Vagina (tissue), 2 donors: ENCODE measurements at regions of chr1 and their contacts with region 1.

Region 1: DNA sequence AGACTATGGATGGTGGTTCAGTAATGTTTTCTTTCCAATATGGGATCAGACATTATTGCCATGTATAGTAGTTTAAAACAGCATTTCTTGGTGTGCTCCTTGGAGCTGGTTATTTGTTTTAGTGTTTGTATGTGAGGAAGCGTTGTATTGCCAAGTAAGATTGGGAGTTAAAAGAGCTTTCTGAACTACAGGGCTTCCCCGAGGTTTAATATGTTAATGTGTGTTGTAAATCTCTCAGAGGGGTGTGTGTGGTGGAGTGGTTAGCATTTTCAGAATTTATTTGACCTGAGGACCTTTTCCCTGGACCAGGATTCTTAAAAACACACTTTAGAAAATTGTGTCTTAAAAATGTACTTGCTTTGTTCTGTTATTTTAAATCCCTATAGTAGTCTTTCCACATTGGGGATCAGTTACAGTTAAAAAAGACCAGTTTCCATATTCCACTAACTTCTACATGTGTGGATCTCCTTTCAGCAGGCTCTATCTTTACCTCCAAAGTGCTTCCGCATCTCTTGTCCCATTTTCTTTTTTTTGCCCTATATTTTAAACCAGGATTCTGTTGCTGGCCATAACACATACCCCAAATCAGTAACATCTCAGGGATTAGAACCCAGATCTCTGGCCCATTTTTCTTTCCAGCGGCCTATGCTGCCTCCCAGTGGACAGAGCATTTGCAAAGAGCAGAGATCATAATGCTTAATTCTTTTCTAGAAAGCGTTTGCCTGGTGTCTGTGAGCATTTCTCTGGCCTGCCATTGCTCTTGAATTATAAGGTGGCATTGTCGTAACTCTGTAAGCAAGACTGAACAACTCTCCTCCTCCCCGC is 58.6 kb downstream of the PBX1 start:
- DNase-seq: no peak
- H3K4me3 ChIP-seq: no peak overlapping the region
- H3K27ac ChIP-seq: peak overlapping the region; percentile 48
- H3K4me1 ChIP-seq: peaks cover 95% of the 10 kb centered on the region
- H3K27me3 ChIP-seq: no peaks in the 10 kb centered on the region
- CTCF ChIP-seq: peak in 2 of 3 experiments; percentile 9 to 32
- POLR2A ChIP-seq: no peak

Region 2: GRCh38 chr1:163535807-163536206 is 1081.8 kb before region 1 on chr1:
- intact Hi-C with region 1: loop called (anchors 10 kb)
- DNase-seq: no peak
- H3K4me3 ChIP-seq: no peak overlapping the region
- H3K27ac ChIP-seq: no peak overlapping the region
- H3K4me1 ChIP-seq: no peaks in the 10 kb centered on the region
- H3K27me3 ChIP-seq: no peaks in the 10 kb centered on the region
- CTCF ChIP-seq: peak in 1 of 3 experiments; percentile 27
- POLR2A ChIP-seq: no peak

Region 3: GRCh38 chr1:164433141-164433817 is 184.3 kb before region 1 on chr1:
- intact Hi-C with region 1: no loop called
- DNase-seq: no peak
- H3K4me3 ChIP-seq: no peak overlapping the region
- H3K27ac ChIP-seq: no peak overlapping the region
- H3K4me1 ChIP-seq: no peaks in the 10 kb centered on the region
- H3K27me3 ChIP-seq: no peaks in the 10 kb centered on the region
- CTCF ChIP-seq: no peak
- POLR2A ChIP-seq: no peak

Region 4: GRCh38 chr1:164558461-164559341 is 58.9 kb before region 1 on chr1 and contains the start of gene PBX1:
- intact Hi-C with region 1: loop called (anchors 10 kb)
- DNase-seq: peak; percentile 98 to 100
- H3K4me3 ChIP-seq: peak within 1 kb of the TSS; percentile 82 to 91
- H3K27ac ChIP-seq: peak within 1 kb of the TSS; percentile 95
- H3K4me1 ChIP-seq: peaks cover 17% of the 10 kb centered on the region
- H3K27me3 ChIP-seq: no peaks in the 10 kb centered on the region
- CTCF ChIP-seq: no peak
- POLR2A ChIP-seq: peak in 1 of 2 donors; percentile 97
- total RNA-seq, gene PBX1: 69.0 TPM

Region 5: DNA sequence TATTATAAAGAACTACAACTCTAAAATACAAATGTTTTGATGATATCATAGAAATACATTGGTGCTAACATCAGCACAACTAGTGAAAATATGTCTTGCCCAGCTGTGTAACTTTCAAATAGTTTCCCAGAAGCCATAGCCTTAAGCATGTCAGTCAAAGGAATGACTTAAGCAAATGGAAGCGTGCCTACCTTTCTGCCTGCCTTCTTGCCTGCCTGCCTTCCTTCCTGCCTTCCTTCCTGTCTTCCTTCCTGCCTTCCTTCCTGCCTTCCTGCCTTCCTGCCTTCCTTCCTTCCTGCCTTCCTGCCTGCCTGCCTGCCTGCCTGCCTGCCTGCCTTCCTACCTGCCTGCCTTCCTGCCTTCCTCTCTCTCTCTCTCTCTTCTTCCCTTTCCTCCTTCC is 45.4 kb after region 1 on chr1:
- intact Hi-C with region 1: loop called (anchors 1 kb)
- DNase-seq: no peak
- H3K4me3 ChIP-seq: no peak overlapping the region
- H3K27ac ChIP-seq: no peak overlapping the region
- H3K4me1 ChIP-seq: peaks cover 77% of the 10 kb centered on the region
- H3K27me3 ChIP-seq: no peaks in the 10 kb centered on the region
- CTCF ChIP-seq: no peak
- POLR2A ChIP-seq: no peak